Gastrocnemius medialis (tissue), 4 donors: ENCODE measurements at regions of chr17 and their contacts with region 1.

Region 1: GRCh38 chr17:5921512-5922282 is 148.5 kb upstream of the WSCD1 start:
- DNase-seq: peak; percentile 19 to 34
- ATAC-seq: peak in 1 of 2 donors; percentile 53
- H3K4me3 ChIP-seq: no peak overlapping the region
- H3K27ac ChIP-seq: peak overlapping the region in 2 of 4 donors; percentile 33 to 59
- H3K4me1 ChIP-seq: no peaks in the 10 kb centered on the region
- H3K27me3 ChIP-seq: no peaks in the 10 kb centered on the region
- CTCF ChIP-seq: no peak
- POLR2A ChIP-seq: no peak

Region 2: DNA sequence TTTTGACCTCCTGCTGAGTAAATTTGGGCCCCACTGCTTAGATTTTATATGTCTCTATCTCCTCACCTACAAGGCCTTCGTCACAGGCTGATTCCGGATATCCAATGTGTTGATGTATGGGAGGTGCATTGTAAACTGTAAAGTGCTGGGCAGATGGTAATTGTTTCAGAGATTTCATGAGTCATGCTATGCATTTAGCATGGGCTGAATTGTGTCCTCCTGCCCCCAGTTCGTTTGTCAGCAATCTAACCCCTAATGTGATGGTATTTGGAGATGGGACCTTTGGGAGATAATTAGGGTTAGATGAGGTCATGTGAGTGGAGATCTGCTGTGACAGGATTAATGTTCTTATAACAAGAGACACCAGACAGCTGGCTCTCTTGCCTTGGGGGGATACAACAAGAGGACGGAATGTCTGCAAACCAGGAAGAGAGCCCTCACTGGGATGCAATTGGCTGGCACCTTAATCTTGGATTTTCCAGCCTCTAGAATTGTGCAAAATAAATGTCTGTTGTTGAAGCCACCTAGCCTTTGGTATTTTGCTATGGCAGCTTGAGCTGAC is 235.5 kb before region 1 on chr17:
- in situ Hi-C with region 1: no loop called
- intact Hi-C with region 1: no loop called
- DNase-seq: no peak
- ATAC-seq: no peak
- H3K4me3 ChIP-seq: no peak overlapping the region
- H3K27ac ChIP-seq: no peak overlapping the region
- H3K4me1 ChIP-seq: no peaks in the 10 kb centered on the region
- H3K27me3 ChIP-seq: peaks cover 0 to 4% (median 3%) of the 10 kb centered on the region in 3 donors
- CTCF ChIP-seq: no peak
- POLR2A ChIP-seq: no peak

Region 3: DNA sequence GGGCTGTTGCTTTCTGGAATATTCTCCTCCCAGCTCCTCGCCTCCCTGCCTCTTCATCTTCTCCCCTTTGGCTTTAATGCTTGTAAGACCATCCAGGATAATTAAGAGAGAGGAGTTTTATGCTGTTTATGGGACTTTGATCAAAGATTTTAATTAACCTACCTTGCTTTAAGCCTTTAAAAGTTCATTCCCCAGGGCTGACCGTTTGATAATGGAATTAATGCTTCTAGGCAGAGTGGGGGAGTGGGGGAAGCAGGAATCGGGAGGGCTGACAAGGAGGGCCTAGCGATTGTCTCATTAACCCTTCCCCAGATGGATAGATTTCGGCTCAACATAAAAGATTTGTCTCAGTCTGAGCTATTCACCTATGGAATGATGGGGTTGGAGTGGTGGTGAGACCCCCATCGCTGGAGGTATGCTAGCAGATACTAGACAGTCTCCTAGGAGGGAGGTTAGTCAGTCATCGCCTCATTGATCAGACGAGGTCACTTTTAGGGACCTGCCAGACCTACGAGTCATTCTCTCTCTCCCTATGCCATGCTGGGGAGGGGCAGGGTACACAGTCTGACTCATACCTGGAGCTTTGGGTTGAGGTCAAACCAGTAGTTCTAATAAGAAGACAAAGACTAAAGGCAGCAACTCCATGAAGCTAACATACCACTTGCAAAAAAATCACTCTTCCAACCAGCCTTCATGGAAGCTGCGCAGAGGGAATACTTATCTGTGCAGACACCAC is 100.8 kb before region 1 on chr17:
- in situ Hi-C with region 1: loop called in 1 of 4 experiments (anchors 25 kb)
- intact Hi-C with region 1: no loop called
- DNase-seq: no peak
- ATAC-seq: no peak
- H3K4me3 ChIP-seq: no peak overlapping the region
- H3K27ac ChIP-seq: no peak overlapping the region
- H3K4me1 ChIP-seq: no peaks in the 10 kb centered on the region
- H3K27me3 ChIP-seq: no peaks in the 10 kb centered on the region
- CTCF ChIP-seq: no peak
- POLR2A ChIP-seq: no peak

Region 4: DNA sequence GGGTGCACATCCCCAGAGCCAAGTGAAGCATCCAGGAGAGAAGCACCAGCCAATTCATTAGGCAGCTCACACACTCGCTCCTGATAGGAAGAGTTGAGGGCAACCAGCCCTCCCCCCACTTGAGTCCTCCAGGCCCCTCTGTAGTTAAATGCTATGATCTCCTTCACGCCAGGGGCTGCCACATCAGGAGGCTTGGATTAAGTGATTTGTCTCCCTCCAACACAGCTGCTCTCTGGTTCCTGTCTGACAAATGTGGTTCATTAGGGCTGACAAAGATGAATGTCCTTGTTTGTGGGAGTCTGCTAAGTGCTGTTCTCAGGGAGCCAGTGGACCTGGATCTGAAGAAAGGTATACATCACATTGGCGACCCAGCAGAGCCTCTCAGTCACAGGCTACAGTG is 54.0 kb after region 1 on chr17:
- in situ Hi-C with region 1: no loop called
- intact Hi-C with region 1: no loop called
- DNase-seq: no peak
- ATAC-seq: no peak
- H3K4me3 ChIP-seq: no peak overlapping the region
- H3K27ac ChIP-seq: no peak overlapping the region
- H3K4me1 ChIP-seq: no peaks in the 10 kb centered on the region
- H3K27me3 ChIP-seq: no peaks in the 10 kb centered on the region
- CTCF ChIP-seq: no peak
- POLR2A ChIP-seq: no peak